GM18951 (cell line): ENCODE measurements at regions of chr3 and their contacts with region 1.

Region 1: DNA sequence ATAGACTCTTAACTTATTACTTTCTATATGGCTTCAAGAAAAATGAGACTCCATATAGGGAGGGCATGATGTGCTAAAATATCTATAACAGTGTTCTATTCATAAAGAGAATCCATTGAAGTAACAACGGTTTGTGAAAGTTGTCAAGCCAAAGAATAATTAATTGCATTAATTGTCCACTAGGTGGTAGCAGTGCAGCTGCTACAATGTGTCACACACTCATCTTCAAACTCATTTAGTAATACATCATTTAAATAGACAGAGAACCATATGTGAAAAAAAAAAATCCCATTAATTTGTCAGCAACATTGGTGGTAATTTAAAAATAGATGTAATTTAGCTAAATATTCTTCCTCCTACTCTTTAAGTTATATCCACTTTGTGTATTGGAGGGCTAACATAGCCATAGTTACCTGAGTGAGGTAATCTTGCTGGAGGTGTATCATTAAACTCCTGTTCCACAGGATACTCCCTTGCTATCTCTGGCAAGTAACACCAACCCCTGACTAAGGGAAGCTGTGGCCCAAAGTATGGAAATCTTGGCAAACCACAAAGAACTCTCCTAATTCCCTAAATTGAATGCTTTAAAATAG is 3.7 kb upstream of the CPA3 start:
- POLR2A ChIP-seq: no peak

Region 2: GRCh38 chr3:148229107-148229506 is 632.3 kb before region 1 on chr3:
- in situ Hi-C with region 1: no loop called
- POLR2A ChIP-seq: no peak

Region 3: DNA sequence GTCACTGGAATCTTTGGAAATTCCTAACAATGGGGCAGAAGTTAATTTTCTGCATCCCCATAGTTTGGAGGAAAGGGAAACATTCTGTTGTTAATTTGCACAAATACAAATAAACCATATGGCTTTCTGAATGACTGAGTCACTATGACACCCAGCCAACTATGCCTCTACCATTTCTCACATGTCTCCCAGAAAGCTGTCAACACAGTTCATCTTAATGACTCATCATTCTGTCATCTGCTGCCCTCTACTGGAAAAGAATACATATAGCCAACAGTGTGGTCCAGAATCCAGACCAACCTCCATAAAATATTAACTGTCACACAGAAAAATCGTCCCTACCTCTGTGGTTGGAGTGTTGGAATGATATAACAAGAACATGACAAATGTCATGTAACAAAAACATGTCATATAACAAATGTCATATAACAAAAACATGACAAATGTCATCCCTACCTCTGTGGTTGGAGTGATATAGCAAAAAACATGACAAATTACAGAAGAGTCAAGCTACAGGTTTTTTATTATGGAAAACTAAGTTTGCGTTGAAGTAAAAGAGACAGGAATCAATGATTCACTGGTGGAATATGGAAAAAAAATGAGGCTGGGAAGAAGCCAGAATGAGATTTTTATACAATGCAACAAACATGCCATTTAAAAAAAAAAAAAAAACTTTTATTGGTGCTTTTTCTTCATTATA is 82.3 kb after region 1 on chr3:
- in situ Hi-C with region 1: loop called (anchors 10 kb)
- POLR2A ChIP-seq: no peak